MCF 10A (cell line): ENCODE measurements at regions of chr19 and their contacts with region 1.

Region 1: GRCh38 chr19:19488875-19489690 is 26.3 kb downstream of the TSSK6 start:
- DNase-seq: peak; percentile 52
- H3K4me3 Mint-ChIP-seq: peak overlapping the region; percentile 28
- H3K27ac Mint-ChIP-seq: peak overlapping the region; percentile 75
- H3K4me1 Mint-ChIP-seq: peaks cover 12% of the 10 kb centered on the region
- H3K27me3 Mint-ChIP-seq: no peaks in the 10 kb centered on the region
- CTCF ChIP-seq: no peak

Region 2: GRCh38 chr19:19145684-19146608 is 343.1 kb before region 1 on chr19:
- CTCF ChIA-PET with region 1: interaction called, 9 read pairs
- POLR2A ChIA-PET with region 1: no interaction called
- intact Hi-C with region 1: loop called (anchors 1 kb)
- DNase-seq: peak; percentile 73
- H3K4me3 Mint-ChIP-seq: no peak overlapping the region
- H3K27ac Mint-ChIP-seq: no peak overlapping the region
- H3K4me1 Mint-ChIP-seq: no peaks in the 10 kb centered on the region
- H3K27me3 Mint-ChIP-seq: no peaks in the 10 kb centered on the region
- CTCF ChIP-seq: peak; percentile 95

Region 3: GRCh38 chr19:19361075-19361594 is 127.9 kb before region 1 on chr19:
- CTCF ChIA-PET with region 1: interaction called, 176 read pairs
- POLR2A ChIA-PET with region 1: interaction called, 8 read pairs
- intact Hi-C with region 1: loop called (anchors 1 kb)
- DNase-seq: peak; percentile 90
- H3K4me3 Mint-ChIP-seq: no peak overlapping the region
- H3K27ac Mint-ChIP-seq: no peak overlapping the region
- H3K4me1 Mint-ChIP-seq: peaks cover 7% of the 10 kb centered on the region
- H3K27me3 Mint-ChIP-seq: no peaks in the 10 kb centered on the region
- CTCF ChIP-seq: peak; percentile 69

Region 4: DNA sequence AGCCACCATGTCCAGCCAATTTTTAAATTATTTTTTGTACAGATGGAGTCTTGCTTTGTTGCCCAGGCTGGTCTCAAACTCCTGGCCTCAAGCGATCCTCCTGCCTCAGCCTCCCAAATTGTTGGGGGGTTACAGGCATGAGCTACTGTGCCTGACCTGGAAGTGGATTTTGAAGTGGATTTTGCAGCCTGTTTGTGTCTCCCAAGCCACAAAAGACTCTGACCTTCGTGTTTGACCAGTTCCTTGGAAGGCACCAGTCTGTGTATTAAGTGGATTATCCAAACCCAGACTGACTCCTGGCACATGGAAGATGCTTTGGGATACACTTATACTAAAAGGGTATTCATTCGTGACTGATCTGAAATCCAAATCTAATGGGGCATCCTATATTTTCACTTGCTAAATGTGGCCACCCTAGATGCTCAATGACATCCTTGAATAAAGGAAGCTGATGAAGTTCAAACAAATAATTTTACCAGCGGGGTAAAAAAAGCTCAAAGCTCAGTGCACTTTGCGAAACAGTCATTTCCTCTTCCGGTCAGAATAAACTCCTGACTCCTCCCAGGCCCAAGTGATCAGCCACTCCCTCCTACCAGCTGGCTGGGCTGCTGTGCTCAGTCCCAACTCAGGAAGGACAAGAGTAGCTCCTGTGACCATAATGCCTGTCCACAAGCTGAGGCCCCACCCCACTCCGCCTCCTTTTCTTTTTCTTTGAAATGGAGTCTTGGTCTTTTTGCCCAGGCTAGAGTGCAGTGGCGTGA is 116.2 kb before region 1 on chr19:
- CTCF ChIA-PET with region 1: interaction called, 176 read pairs
- POLR2A ChIA-PET with region 1: interaction called, 6 read pairs
- intact Hi-C with region 1: no loop called
- DNase-seq: peak; percentile 56
- H3K4me3 Mint-ChIP-seq: no peak overlapping the region
- H3K27ac Mint-ChIP-seq: peak overlapping the region; percentile 51
- H3K4me1 Mint-ChIP-seq: peaks cover 4% of the 10 kb centered on the region
- H3K27me3 Mint-ChIP-seq: no peaks in the 10 kb centered on the region
- CTCF ChIP-seq: no peak

Region 5: DNA sequence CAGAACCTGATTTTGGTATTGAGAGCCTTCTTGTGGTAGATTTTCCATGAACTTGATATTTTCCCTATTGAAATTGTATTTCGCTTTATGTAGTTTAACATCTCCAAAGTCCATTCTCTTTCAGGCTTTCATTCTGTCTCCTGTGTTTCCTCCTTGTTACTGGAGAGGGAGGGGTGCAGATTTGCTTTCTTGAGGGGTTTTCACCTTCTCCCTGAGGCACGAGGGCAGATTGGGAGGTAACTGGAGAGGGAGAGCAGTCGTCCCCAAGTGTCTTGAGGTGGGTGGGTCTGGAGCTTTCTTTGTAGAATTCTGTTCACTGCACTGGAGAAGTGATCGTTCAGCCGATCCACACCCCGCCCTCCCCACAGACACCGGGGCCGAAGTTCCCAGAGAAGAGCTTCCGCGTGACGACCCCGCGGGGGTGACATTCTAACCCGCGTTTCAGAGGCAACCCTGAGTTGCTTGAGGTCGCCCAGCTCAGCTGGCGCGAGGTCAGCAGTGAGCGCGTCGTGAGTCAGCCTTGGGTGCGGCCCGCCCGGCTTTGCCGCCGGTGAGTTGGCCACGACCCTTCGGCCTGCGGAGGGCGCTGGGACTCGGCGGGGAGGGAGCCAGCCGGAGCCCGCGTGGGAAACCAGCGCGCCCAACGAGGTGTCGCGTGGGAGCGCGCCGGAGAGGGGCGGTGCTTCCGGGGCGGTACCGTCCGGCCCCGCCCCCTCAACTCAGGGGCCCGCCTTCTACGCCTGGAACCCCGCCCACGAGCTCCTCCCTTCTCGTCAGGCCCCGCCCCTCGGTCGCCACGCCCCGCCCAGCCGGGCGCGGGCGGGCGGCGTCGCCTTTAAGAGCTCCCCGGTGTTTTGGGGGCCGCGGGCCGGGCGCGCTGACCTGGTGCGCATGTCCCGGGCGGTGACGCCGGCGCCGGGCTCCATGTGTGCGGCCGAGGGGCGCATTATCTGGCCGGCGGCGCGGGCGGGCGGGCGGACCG is 83.9 kb before region 1 on chr19 and contains the start of gene GATAD2A:
- CTCF ChIA-PET with region 1: interaction called, 27 read pairs
- POLR2A ChIA-PET with region 1: interaction called, 7 read pairs
- intact Hi-C with region 1: loop called (anchors 5 kb)
- DNase-seq: peak; percentile 95
- H3K4me3 Mint-ChIP-seq: peak within 1 kb of the TSS; percentile 95
- H3K27ac Mint-ChIP-seq: peak within 1 kb of the TSS; percentile 94
- H3K4me1 Mint-ChIP-seq: peaks cover 39% of the 10 kb centered on the region
- H3K27me3 Mint-ChIP-seq: no peaks in the 10 kb centered on the region
- CTCF ChIP-seq: no peak
- total RNA-seq, gene GATAD2A: 77.4 and 91.5 TPM in 2 replicates

Region 6: DNA sequence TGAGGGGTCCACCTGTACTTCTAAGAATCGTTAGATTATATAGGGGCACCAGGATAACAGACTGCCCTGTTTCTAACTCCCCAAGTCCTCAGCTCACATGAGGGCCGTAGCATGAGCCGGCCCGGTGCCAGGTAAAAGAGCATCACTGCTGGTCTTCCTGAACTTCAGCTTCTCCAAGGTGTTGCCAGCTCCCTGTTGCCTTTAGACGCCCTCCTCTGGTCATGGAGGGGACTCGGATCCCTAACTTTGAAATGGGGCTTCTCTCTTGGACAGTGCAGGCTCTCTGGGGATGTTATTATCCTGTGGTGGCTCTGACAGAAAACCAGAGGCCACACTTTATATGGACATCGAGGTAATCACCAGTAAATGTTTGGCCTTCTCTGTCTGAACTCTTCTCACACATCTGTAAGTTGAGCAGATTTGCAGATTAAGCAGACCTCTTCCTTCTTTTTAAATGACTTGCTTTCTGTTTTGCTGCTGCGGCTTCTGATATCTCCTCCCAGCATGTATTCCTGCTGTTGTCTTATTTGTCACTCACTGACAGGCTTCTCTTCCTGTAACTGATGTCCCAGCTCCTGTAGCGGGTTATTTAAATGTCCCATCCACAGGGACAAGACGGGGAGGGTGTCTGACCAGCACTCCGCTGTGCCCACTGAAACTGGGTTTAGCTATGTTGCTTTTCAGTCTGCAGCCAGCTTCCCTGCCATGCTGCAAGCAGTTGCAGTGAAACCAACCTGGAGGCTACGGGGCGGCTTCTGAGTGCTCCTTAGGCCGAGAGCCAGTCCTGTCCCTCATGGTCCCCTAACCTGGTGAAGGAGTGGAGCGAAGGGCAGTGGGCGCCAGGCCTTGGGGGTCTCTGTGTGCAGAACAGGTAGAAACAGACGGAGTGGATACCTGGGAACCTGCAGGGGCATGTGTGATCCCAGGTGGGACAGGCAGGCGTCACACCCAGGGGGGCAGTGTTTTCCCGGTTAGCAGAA is 12.9 kb before region 1 on chr19:
- CTCF ChIA-PET with region 1: interaction called, 30 read pairs
- POLR2A ChIA-PET with region 1: interaction called, 3 read pairs
- intact Hi-C with region 1: no loop called
- DNase-seq: peak; percentile 43
- H3K4me3 Mint-ChIP-seq: no peak overlapping the region
- H3K27ac Mint-ChIP-seq: peak overlapping the region; percentile 31
- H3K4me1 Mint-ChIP-seq: peaks cover 4% of the 10 kb centered on the region
- H3K27me3 Mint-ChIP-seq: no peaks in the 10 kb centered on the region
- CTCF ChIP-seq: peak; percentile 22